H1 (cell line): ENCODE measurements at regions of chr16 and their contacts with region 1.

Region 1: GRCh38 chr16:28943281-28943680 is 7.5 kb upstream of the NFATC2IP start:
- DNase-seq: no peak
- H3K4me3 ChIP-seq: no peak overlapping the region
- H3K27ac ChIP-seq: no peak overlapping the region
- H3K4me1 ChIP-seq: peaks cover 0 to 5% (median 1%) of the 10 kb centered on the region in 4 experiments; a peak in 3 of 7 replicates
- H3K27me3 ChIP-seq: no peaks in the 10 kb centered on the region
- CTCF ChIP-seq: no peak
- EP300 ChIP-seq: no peak
- POLR2A ChIP-seq: no peak
- RAD21 ChIP-seq: no peak

Region 2: DNA sequence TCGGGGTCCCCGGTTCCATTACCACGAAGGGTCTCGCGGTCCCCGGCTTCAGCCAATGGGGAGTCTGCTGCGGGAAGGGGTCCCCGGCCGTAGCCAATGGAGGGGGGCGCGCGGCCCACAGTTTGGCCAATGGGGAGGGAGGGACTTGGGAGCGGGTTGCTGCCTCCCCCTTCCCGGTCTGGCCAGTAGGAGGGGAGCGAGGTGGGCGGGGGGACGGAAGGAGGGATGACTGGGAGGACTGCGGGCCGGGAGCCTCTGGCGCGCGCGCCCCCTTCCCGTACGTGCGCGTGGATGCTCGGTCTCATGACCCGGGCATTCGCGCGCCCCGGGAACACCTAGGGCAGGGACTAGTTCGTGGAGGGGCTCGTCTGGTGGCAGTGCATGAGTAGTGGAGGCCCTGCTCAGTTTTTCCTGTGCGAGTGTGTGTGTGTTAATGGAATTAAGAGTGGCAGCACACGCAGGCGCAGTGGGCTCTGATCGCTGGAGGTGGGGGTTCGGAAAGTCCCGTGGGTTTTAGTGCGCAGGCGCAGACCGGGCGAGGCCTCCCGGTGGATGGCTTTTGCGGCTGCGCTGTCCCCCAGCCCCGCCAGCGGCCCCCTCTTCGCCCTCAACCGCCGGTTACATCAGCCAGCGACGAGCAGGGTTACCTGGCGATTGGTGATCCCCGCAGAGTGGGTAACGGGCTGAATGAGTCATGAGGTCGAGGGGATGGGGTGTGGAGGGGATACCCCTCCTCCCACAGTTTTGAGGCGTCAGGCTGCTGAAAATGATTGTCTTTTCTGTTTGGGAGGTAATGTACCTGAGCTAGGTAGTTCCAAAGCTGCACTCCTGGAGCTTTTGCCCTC is 119.2 kb before region 1 on chr16:
- CTCF ChIA-PET with region 1: interaction called, 3 read pairs
- POLR2A ChIA-PET with region 1: interaction called, 13 read pairs
- DNase-seq: peak; percentile 92 to 95
- H3K4me3 ChIP-seq: peak overlapping the region; percentile 88 to 97 (median 92)
- H3K27ac ChIP-seq: peak overlapping the region; percentile 96
- H3K4me1 ChIP-seq: peaks cover 0 to 3% (median under 1%) of the 10 kb centered on the region in 4 experiments; a peak in 3 of 7 replicates
- H3K27me3 ChIP-seq: no peaks in the 10 kb centered on the region
- CTCF ChIP-seq: no peak
- EP300 ChIP-seq: no peak
- POLR2A ChIP-seq: peak; percentile 24 to 82
- RAD21 ChIP-seq: no peak

Region 3: GRCh38 chr16:28863929-28864793 is 79.1 kb before region 1 on chr16:
- CTCF ChIA-PET with region 1: interaction called, 18 read pairs
- POLR2A ChIA-PET with region 1: interaction called, 15 read pairs
- DNase-seq: no peak
- H3K4me3 ChIP-seq: peak overlapping the region; percentile 86 to 100 (median 93)
- H3K27ac ChIP-seq: no peak overlapping the region
- H3K4me1 ChIP-seq: peaks cover 0 to 8% (median 3%) of the 10 kb centered on the region in 4 experiments; a peak in 6 of 7 replicates
- H3K27me3 ChIP-seq: no peaks in the 10 kb centered on the region
- CTCF ChIP-seq: no peak
- EP300 ChIP-seq: peak in 1 of 2 experiments; percentile 82; a peak in 1 of 3 replicates
- POLR2A ChIP-seq: no peak
- RAD21 ChIP-seq: no peak

Region 4: DNA sequence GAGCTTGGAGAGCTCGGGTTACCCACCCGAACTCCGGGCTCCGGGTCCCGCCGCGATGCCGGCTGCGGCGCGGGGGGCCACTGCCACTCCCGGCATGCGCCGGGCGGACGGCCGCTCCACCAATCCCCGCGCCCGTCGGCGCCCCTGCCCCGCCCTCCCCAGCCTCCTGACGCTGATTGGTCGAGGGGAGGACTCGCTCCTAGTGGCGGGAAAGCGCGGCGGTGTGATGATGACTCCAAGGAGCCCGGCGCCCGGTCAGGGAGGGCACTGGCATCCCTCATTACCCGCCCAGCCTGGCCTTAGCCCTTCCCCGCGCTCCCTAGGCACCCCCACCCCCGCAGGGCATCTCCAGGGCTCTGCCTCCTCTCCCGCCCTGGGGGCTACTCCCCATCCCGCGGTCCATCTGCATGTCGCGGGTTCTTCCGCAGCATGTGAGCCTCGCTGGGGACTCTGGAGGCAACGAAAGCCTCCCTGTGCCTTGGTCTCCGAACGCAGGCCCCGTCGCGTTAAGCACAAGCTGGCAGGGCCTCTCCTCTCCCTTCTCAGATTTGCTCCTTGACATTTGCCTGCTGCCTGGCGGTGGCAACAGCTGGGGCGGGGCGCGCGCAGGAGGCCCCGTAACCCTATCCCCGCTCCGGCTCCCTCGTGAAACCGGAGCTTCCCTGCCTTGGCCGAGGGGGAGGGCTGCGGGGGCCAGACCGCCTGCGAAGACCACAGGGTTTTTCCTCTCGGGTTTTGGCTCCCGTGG is 63.3 kb before region 1 on chr16:
- CTCF ChIA-PET with region 1: interaction called, 42 read pairs
- POLR2A ChIA-PET with region 1: interaction called, 17 read pairs
- DNase-seq: peak; percentile 67 to 89
- H3K4me3 ChIP-seq: peak overlapping the region; percentile 61 to 78 (median 68)
- H3K27ac ChIP-seq: peak overlapping the region; percentile 59; the same call in 1 of the 2 replicates
- H3K4me1 ChIP-seq: peaks cover 0 to 41% (median 30%) of the 10 kb centered on the region in 4 experiments; a peak in 6 of 7 replicates
- H3K27me3 ChIP-seq: peaks cover 0 to 8% (median 7%) of the 10 kb centered on the region in 4 experiments; a peak in 2 of 7 replicates
- CTCF ChIP-seq: no peak
- EP300 ChIP-seq: no peak
- POLR2A ChIP-seq: peak in 1 of 2 experiments; percentile 46; a peak in 1 of 3 replicates
- RAD21 ChIP-seq: no peak

Region 5: GRCh38 chr16:28930652-28931051 is 12.6 kb before region 1 on chr16:
- CTCF ChIA-PET with region 1: interaction called, 32 read pairs
- POLR2A ChIA-PET with region 1: interaction called, 4 read pairs
- DNase-seq: no peak
- H3K4me3 ChIP-seq: no peak overlapping the region
- H3K27ac ChIP-seq: no peak overlapping the region
- H3K4me1 ChIP-seq: no peaks in the 10 kb centered on the region
- H3K27me3 ChIP-seq: no peaks in the 10 kb centered on the region
- CTCF ChIP-seq: no peak
- EP300 ChIP-seq: no peak
- POLR2A ChIP-seq: no peak
- RAD21 ChIP-seq: no peak